ENCODE measurements at regions of chr16 and their contacts with region 1.

Region 1: GRCh38 chr16:27179500-27180072 is 23.7 kb upstream of the KDM8 start:
- DNase-seq: peak; percentile 88 to 91
- H3K4me3 ChIP-seq: no peak overlapping the region
- H3K27ac ChIP-seq: no peak overlapping the region
- H3K4me1 ChIP-seq: peaks cover 0 to 12% (median 5%) of the 10 kb centered on the region in 4 donors
- H3K27me3 ChIP-seq: no peaks in the 10 kb centered on the region
- CTCF ChIP-seq: peak in 6 of 7 experiments; percentile 46 to 96 (median 92)
- EP300 ChIP-seq: no peak
- POLR2A ChIP-seq: no peak

Region 2: DNA sequence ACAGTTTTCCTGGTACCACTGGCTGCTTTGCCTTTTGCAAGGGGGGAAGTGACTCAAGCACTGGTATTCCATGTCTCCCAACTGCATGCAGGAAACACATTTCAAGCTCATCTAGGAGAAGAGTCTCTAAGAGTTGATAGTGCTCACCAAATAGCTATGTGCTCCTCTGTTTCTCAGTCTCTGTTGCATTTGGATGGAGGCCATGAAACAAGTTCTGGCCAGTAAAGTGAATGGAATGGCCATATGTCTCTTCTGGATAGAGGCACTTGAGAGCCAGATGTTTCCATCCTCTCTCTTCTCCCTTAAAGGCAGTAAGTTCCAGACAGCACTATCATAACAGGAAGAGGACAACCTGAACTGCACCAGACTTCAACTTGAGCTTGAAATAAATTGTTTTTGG is 52.3 kb before region 1 on chr16:
- intact Hi-C with region 1: no loop called
- DNase-seq: no peak
- H3K4me3 ChIP-seq: no peak overlapping the region
- H3K27ac ChIP-seq: no peak overlapping the region
- H3K4me1 ChIP-seq: no peaks in the 10 kb centered on the region
- H3K27me3 ChIP-seq: no peaks in the 10 kb centered on the region
- CTCF ChIP-seq: no peak
- EP300 ChIP-seq: no peak
- POLR2A ChIP-seq: no peak

Region 3: GRCh38 chr16:27235055-27235937 is 55.7 kb after region 1 on chr16:
- intact Hi-C with region 1: no loop called
- DNase-seq: peak; percentile 76 to 89
- H3K4me3 ChIP-seq: no peak overlapping the region
- H3K27ac ChIP-seq: peak overlapping the region; percentile 38 to 86 (median 81)
- H3K4me1 ChIP-seq: peaks cover 35 to 78% (median 56%) of the 10 kb centered on the region in 4 donors
- H3K27me3 ChIP-seq: no peaks in the 10 kb centered on the region
- CTCF ChIP-seq: peak in 5 of 7 experiments; percentile 55 to 80 (median 69)
- EP300 ChIP-seq: no peak
- POLR2A ChIP-seq: no peak

Region 4: GRCh38 chr16:27449434-27450195 is 270.0 kb after region 1 on chr16:
- intact Hi-C with region 1: loop called (anchors 10 kb)
- DNase-seq: peak; percentile 43 to 69
- H3K4me3 ChIP-seq: no peak overlapping the region
- H3K27ac ChIP-seq: no peak overlapping the region
- H3K4me1 ChIP-seq: peaks cover 0 to 12% (median 8%) of the 10 kb centered on the region in 4 donors
- H3K27me3 ChIP-seq: peaks cover 0 to 73% (median 19%) of the 10 kb centered on the region in 3 donors
- CTCF ChIP-seq: no peak
- EP300 ChIP-seq: no peak
- POLR2A ChIP-seq: no peak

Measured in stomach (tissue), 19 donors.